ENCODE measurements at regions of chr6 and their contacts with region 1.

Region 1: GRCh38 chr6:79570129-79571029 is 33.1 kb upstream of the LCA5 start:
- DNase-seq: no peak
- ATAC-seq: no peak
- H3K4me3 Mint-ChIP-seq: no peak overlapping the region
- H3K27ac Mint-ChIP-seq: no peak overlapping the region
- H3K4me1 Mint-ChIP-seq: no peaks in the 10 kb centered on the region
- H3K27me3 Mint-ChIP-seq: no peaks in the 10 kb centered on the region

Region 2: GRCh38 chr6:79215233-79215824 is 355.1 kb before region 1 on chr6:
- CTCF ChIA-PET with region 1: no interaction called
- POLR2A ChIA-PET with region 1: no interaction called
- intact Hi-C with region 1: no loop called
- DNase-seq: no peak
- ATAC-seq: no peak
- H3K4me3 Mint-ChIP-seq: no peak overlapping the region
- H3K27ac Mint-ChIP-seq: no peak overlapping the region
- H3K4me1 Mint-ChIP-seq: no peaks in the 10 kb centered on the region
- H3K27me3 Mint-ChIP-seq: no peaks in the 10 kb centered on the region

Region 3: GRCh38 chr6:79404681-79405156 is 165.7 kb before region 1 on chr6:
- CTCF ChIA-PET with region 1: no interaction called
- POLR2A ChIA-PET with region 1: no interaction called
- intact Hi-C with region 1: no loop called
- DNase-seq: no peak
- ATAC-seq: no peak
- H3K4me3 Mint-ChIP-seq: no peak overlapping the region
- H3K27ac Mint-ChIP-seq: no peak overlapping the region
- H3K4me1 Mint-ChIP-seq: no peaks in the 10 kb centered on the region
- H3K27me3 Mint-ChIP-seq: no peaks in the 10 kb centered on the region

Region 4: DNA sequence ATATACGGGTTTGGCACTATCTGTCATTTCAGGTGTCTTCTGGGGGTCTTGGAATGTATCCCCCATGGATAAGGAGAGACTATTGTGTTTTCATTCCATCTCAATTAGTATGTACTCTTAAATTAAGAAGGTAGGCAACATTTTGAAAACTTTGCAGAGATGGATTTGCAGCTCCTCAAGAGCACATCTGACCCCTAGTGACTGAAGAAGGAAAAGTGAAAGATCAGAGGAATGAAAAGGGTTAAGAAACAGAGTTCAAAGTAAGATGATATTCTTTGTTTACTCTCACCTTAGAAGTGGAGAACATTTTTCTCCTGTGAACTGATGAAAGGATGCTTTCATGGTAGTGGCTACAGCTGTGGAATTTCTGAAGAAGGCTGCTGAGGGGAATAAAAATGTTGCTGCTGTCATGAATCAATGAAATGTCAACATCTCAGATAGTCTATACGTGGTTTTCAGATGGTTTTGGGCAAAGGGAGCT is 102.3 kb after region 1 on chr6:
- CTCF ChIA-PET with region 1: interaction called, 6 read pairs
- POLR2A ChIA-PET with region 1: no interaction called
- intact Hi-C with region 1: loop called (anchors 1 kb)
- DNase-seq: no peak
- ATAC-seq: peak; percentile 28
- H3K4me3 Mint-ChIP-seq: no peak overlapping the region
- H3K27ac Mint-ChIP-seq: peak overlapping the region; percentile 74
- H3K4me1 Mint-ChIP-seq: peaks cover 31% of the 10 kb centered on the region
- H3K27me3 Mint-ChIP-seq: no peaks in the 10 kb centered on the region

Region 5: GRCh38 chr6:79713701-79714322 is 143.4 kb after region 1 on chr6:
- CTCF ChIA-PET with region 1: interaction called, 7 read pairs
- POLR2A ChIA-PET with region 1: no interaction called
- intact Hi-C with region 1: loop called (anchors 1 kb)
- DNase-seq: peak; percentile 70
- ATAC-seq: peak; percentile 70
- H3K4me3 Mint-ChIP-seq: no peak overlapping the region
- H3K27ac Mint-ChIP-seq: no peak overlapping the region
- H3K4me1 Mint-ChIP-seq: no peaks in the 10 kb centered on the region
- H3K27me3 Mint-ChIP-seq: peaks cover 8% of the 10 kb centered on the region

Region 6: GRCh38 chr6:79813854-79814709 is 243.7 kb after region 1 on chr6:
- CTCF ChIA-PET with region 1: interaction called, 3 read pairs
- POLR2A ChIA-PET with region 1: no interaction called
- intact Hi-C with region 1: loop called (anchors 2 kb)
- DNase-seq: peak; percentile 81
- ATAC-seq: peak; percentile 71
- H3K4me3 Mint-ChIP-seq: no peak overlapping the region
- H3K27ac Mint-ChIP-seq: no peak overlapping the region
- H3K4me1 Mint-ChIP-seq: no peaks in the 10 kb centered on the region
- H3K27me3 Mint-ChIP-seq: peaks cover 2% of the 10 kb centered on the region